HEK293T (cell line): ENCODE measurements at regions of chr3 and their contacts with region 1.

Region 1: DNA sequence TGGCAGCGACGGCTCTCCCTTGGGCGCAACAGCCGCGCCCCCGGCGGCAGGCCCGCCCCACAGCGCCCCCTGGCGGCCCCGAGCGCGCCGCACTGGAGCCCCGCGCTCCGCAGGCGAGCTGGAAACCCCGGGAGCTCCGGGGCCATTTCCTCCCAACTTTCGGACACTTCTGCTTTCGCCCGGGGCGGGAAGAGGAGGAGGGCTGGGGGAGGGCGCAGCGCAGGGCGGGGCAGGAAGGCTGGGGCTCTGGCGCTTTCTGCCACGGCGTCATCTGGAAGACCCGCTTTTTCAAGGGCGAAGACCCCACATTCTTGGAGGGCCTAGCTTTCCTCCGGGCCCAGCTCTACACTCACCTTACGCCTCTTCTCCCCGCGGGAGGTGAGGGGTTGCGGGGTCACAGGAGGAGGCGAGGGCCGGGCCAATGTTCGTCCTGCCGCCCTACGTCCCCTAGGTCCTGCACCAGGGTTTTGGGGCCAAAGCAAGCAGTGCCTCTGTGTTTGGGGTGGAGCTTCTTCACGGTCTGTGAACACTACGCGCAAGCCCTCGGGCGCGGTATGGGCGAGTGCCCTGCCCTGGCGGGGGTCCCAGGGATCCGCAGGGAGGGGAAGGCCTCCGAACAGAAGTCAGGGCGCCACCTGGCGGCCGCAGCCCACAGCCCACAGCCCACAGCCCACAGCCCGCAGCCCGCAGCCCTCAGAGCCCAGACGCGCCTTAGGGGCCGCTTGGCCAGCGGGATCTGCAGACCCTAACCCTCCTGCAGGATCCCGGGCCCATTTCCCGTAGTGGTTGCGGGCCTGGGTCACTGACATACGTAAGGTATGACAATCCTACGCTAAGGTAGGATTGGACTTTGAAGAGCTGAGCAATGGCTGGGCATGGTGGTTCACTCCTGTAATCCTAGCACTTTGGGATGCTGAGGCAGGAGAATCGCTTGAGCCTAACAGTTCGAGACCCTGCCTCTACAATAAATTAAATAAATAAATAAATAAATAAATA is 31.1 kb downstream of the FOXL2 start:
- DNase-seq: peak; percentile 89

Region 2: GRCh38 chr3:138479438-138479863 is 436.4 kb before region 1 on chr3:
- CTCF ChIA-PET with region 1: interaction called, 13 read pairs
- POLR2A ChIA-PET with region 1: interaction called, 4 read pairs
- DNase-seq: peak; percentile 66

Region 3: GRCh38 chr3:138686771-138687221 is 229.0 kb before region 1 on chr3:
- CTCF ChIA-PET with region 1: interaction called, 23 read pairs
- POLR2A ChIA-PET with region 1: interaction called, 3 read pairs
- DNase-seq: peak; percentile 7

Region 4: GRCh38 chr3:138768125-138768524 is 147.7 kb before region 1 on chr3:
- CTCF ChIA-PET with region 1: no interaction called
- POLR2A ChIA-PET with region 1: no interaction called
- DNase-seq: no peak

Region 5: GRCh38 chr3:138834359-138835212 is 81.2 kb before region 1 on chr3 and contains the start of gene PIK3CB:
- CTCF ChIA-PET with region 1: interaction called, 7 read pairs
- POLR2A ChIA-PET with region 1: interaction called, 11 read pairs
- DNase-seq: peak; percentile 89

Region 6: DNA sequence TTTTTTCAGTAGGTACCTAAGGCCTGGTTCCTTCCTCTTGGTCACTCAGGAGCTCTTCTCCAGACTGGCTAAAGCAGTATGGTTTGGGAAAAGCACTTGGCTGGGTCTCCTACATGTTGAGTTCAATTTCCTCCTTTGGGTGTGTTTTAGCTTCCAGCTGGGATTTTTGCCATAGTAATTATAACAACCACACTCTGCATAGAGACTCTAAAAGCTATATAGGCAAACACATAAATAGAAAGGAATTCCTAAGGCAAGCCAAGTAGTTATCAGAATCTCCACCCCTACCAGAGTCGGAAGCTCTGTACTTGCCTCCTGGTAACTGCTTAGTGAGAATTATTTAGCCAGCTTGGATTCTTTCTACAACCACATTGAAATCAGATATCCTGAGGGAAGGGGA is 17.5 kb before region 1 on chr3:
- CTCF ChIA-PET with region 1: interaction called, 11 read pairs
- POLR2A ChIA-PET with region 1: interaction called, 3 read pairs
- DNase-seq: no peak

Region 7: DNA sequence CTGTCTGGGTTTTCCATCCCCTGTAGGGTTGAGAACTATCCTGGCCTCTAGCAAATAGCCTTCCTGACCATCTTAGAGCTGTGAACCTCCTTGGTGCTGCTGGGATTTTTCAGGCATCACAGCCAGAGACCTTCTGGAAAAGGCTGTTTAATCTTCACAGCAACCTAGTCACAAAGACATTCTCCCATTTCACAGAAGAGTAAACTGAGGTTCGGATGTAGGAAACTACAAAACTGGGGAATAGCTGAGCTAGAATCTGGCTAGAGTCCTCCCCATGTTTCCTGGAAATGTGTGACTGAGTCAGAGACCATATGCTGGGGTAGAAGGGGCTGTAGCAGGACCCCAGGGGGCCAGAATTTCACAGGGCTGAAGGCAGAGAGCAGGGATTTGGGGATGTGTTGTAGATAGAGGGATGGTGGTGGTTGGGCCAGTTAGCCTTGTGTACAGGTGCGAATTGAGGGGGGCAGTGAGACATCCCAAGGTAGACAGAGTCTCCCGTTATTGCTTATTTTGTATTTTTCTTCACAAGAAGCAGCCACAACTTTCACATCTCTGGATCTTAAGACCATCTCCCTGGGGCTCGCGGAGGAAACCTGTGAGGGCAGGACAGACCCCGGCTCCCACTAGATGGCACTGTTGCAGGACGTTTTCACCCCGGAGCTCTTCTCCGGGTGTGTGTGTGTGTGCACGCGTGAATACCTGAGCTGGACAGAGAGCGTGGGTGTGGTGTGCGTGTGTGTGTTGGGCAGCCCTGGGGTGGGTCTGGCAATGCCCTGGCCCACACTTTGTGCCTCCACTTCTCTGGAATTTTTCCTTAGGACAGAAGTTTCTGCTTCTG is 195.8 kb after region 1 on chr3:
- CTCF ChIA-PET with region 1: no interaction called
- POLR2A ChIA-PET with region 1: no interaction called
- DNase-seq: peak; percentile 67